A673 (cell line): ENCODE measurements at regions of chr4 and their contacts with region 1.

Region 1: GRCh38 chr4:173013232-173013930 is 155.2 kb upstream of the GALNT7 start:
- DNase-seq: peak; percentile 82
- H3K4me3 ChIP-seq: no peak overlapping the region
- H3K27ac ChIP-seq: peak overlapping the region; percentile 68
- H3K4me1 ChIP-seq: peaks cover 40% of the 10 kb centered on the region
- H3K27me3 ChIP-seq: no peaks in the 10 kb centered on the region
- CTCF ChIP-seq: peak; percentile 75

Region 2: GRCh38 chr4:172892300-172892699 is 121.1 kb before region 1 on chr4:
- CTCF ChIA-PET with region 1: interaction called, 10 read pairs
- POLR2A ChIA-PET with region 1: no interaction called
- intact Hi-C with region 1: loop called (anchors 5 kb)
- DNase-seq: peak; percentile 45
- H3K4me3 ChIP-seq: no peak overlapping the region
- H3K27ac ChIP-seq: no peak overlapping the region
- H3K4me1 ChIP-seq: no peaks in the 10 kb centered on the region
- H3K27me3 ChIP-seq: no peaks in the 10 kb centered on the region
- CTCF ChIP-seq: peak; percentile 68

Region 3: DNA sequence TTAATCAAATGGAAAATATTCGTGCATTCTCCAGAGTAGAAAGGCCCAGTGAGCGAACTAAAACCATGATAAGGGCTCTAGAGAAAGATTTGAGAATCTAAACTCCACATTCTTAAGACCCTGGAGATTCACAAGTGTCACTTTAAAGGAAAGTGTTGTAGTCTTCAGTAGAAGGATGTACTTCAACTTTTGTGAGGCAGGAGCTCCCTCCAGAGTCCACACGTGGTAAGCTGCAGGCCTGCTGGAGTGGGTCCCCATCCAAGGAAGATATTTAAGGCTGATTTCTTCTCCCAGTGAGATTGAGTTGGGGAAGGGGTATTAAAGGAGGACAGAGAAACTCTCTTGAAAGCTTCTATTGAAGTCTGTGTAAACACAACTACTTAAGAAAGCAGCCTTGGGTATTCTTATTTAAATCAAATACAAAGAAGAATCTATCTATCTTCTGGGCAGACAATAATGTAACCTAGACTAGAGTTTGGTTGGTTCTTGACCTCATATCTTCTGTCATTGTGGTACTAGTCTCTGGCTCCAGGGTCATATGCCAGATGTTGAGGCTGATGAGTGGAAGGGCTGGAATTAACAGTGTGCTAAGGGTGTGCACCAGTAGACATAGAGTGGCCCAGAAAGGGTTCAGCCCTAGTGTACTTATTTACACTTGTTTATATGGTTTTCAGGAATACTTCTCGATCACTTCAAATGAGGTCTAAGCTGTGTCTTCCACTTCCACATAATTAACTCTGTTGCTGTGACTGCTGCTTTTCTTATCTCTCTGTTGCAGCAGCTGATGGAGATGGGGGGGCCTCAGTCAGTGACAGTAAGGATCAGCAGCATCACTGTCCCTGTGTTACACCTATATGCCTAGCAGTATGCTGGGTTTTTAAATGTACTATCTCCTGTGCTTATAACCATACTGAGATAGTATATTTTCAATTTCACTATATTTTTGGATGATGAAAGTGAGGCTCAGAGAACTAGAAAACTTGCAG is 244.6 kb after region 1 on chr4:
- CTCF ChIA-PET with region 1: interaction called, 52 read pairs
- POLR2A ChIA-PET with region 1: no interaction called
- intact Hi-C with region 1: loop called (anchors 1 kb)
- DNase-seq: peak; percentile 86
- H3K4me3 ChIP-seq: no peak overlapping the region
- H3K27ac ChIP-seq: peak overlapping the region; percentile 37
- H3K4me1 ChIP-seq: peaks cover 62% of the 10 kb centered on the region
- H3K27me3 ChIP-seq: no peaks in the 10 kb centered on the region
- CTCF ChIP-seq: peak; percentile 94

Region 4: DNA sequence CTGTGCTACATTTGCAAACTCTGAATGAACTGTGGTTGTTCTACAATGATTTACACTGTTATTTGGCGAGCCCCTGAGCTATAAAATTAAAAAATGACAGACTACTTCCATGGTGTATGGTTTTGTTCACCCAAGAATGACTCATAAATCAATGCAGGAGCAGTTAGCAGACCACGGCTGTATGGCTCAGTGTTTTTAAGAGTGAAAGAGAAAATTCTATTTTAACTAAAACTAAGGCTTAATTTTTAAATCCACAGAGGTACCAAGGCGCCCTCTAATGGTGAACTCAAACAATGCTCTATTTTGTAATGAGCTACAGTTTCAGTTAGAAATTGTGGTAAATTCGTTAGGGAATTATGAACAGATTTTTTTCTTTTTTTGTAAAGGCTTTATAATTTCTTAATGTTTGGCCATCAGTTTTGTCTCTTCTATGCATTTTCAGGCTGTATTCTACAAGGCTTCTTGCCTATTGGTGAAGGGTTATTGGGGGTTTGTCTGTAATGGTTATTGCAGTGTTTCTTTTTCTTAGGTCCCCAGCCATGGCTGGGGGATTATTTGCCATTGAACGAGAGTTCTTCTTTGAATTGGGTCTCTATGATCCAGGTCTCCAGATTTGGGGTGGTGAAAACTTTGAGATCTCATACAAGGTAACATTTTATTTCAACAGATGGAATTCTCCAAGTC is 288.3 kb after region 1 on chr4:
- CTCF ChIA-PET with region 1: interaction called, 36 read pairs
- POLR2A ChIA-PET with region 1: no interaction called
- intact Hi-C with region 1: loop called (anchors 5 kb)
- DNase-seq: peak; percentile 69
- H3K4me3 ChIP-seq: no peak overlapping the region
- H3K27ac ChIP-seq: peak overlapping the region; percentile 34
- H3K4me1 ChIP-seq: peaks cover 15% of the 10 kb centered on the region
- H3K27me3 ChIP-seq: no peaks in the 10 kb centered on the region
- CTCF ChIP-seq: peak; percentile 92

Region 5: DNA sequence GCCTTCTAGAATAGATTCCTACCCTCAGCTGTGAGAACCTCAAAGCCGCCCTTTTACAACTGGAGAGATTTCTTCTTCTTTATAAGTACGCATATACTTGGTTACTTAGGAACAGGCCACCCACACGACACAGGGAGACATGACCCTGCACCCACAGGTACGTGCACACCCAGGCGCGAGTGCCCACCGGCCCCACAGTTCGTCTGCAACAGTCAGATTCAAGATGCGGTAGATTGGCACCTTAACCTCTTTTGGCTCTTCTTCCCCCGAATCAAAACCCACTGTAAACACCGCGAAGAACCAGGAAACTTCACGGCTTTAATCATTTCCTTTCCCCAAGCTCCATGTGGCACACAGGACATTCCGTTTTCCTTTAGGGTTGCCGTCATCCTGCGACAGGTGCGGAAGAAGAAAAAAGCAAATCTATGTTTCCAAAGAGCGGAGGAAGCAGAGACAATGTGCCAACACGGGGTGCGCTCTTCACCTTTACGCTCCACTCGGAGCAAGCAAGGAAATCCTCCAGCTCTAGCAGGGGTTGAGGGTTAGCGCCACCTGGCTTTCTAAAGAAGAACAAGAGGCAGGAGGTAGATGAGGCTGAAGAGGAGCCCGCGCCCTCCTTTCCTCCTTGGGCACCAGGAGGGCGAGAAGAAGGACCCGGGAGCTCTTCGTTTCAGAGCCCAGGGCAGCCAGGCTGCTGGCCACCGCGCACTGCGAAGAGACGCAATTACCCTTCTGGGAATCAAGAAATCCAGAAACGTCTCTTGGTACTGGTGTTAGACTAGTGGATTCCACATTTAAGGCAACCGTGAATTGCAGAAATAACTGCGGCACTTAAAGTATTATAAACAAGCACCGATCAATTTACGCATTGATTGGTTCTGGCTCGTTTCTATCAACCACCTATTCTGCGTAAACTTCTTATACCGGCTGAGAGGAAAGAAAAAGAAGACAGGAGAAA is 480.9 kb after region 1 on chr4:
- CTCF ChIA-PET with region 1: no interaction called
- POLR2A ChIA-PET with region 1: no interaction called
- intact Hi-C with region 1: loop called (anchors 5 kb)
- DNase-seq: peak; percentile 85
- H3K4me3 ChIP-seq: peak overlapping the region; percentile 40
- H3K27ac ChIP-seq: no peak overlapping the region
- H3K4me1 ChIP-seq: peaks cover 39% of the 10 kb centered on the region
- H3K27me3 ChIP-seq: no peaks in the 10 kb centered on the region
- CTCF ChIP-seq: peak; percentile 87